Activated T-helper 1 cell treated with anti-CD3 and anti-CD28 coated beads, Interleukin-12 subunit alpha, Interleukin-12 subunit beta, Interleukin-2, Interleukin-4 antibody, amounts not matched to agents 30 ng/mL and 10 ng/mL and 1 ng/mL, durations not matched to agents 14 hours and 24 hours and 36 hours (primary cell): ENCODE measurements at regions of chr4 and their contacts with region 1.

Region 1: GRCh38 chr4:55395529-55396307 is at the start of gene TMEM165:
- DNase-seq: peak; percentile 88
- H3K4me3 Mint-ChIP-seq: peak within 1 kb of the TSS; percentile 97
- H3K27ac Mint-ChIP-seq: peak within 1 kb of the TSS; percentile 96
- H3K4me1 Mint-ChIP-seq: peaks cover 40% of the 10 kb centered on the region
- H3K27me3 Mint-ChIP-seq: peaks cover 3% of the 10 kb centered on the region
- total RNA-seq, gene TMEM165: 110 and 112 TPM in 2 replicates

Region 2: GRCh38 chr4:54941994-54942552 is 453.6 kb before region 1 on chr4:
- intact Hi-C with region 1: loop called (anchors 10 kb)
- DNase-seq: peak; percentile 16
- H3K4me3 Mint-ChIP-seq: peak overlapping the region; percentile 43
- H3K27ac Mint-ChIP-seq: peak overlapping the region; percentile 38
- H3K4me1 Mint-ChIP-seq: peaks cover 34% of the 10 kb centered on the region
- H3K27me3 Mint-ChIP-seq: no peaks in the 10 kb centered on the region

Region 3: DNA sequence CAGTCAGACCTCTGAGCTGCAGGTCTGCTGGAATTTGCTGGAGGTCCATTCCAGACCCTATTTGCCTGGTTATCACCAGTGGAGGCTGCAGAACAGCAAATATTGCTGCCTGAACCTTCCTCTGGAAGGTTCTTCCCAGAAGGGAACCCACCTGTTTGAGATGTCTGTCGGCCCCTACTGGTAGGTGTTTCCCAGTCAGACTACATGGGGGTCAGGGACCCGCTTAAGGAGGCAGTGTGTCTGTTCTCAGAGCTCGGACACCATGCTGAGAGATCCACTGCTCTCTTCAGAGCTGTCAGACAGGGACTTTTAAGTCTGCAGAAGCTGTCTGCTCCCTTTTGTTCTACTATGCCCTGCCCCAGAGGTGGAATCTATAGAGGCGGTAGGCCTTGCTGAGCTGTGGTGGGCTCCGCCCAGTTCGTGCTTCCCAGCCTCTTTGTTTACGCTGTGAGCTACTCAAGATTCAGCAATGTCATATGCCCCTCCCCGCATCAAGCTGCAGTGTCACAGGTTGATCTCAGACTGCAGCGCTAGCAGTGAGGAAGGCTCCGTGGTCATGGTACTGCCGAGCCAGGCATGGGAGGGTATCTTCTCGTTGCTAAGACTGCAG is 226.3 kb before region 1 on chr4:
- intact Hi-C with region 1: no loop called
- DNase-seq: no peak
- H3K4me3 Mint-ChIP-seq: no peak overlapping the region
- H3K27ac Mint-ChIP-seq: no peak overlapping the region
- H3K4me1 Mint-ChIP-seq: no peaks in the 10 kb centered on the region
- H3K27me3 Mint-ChIP-seq: no peaks in the 10 kb centered on the region

Region 4: DNA sequence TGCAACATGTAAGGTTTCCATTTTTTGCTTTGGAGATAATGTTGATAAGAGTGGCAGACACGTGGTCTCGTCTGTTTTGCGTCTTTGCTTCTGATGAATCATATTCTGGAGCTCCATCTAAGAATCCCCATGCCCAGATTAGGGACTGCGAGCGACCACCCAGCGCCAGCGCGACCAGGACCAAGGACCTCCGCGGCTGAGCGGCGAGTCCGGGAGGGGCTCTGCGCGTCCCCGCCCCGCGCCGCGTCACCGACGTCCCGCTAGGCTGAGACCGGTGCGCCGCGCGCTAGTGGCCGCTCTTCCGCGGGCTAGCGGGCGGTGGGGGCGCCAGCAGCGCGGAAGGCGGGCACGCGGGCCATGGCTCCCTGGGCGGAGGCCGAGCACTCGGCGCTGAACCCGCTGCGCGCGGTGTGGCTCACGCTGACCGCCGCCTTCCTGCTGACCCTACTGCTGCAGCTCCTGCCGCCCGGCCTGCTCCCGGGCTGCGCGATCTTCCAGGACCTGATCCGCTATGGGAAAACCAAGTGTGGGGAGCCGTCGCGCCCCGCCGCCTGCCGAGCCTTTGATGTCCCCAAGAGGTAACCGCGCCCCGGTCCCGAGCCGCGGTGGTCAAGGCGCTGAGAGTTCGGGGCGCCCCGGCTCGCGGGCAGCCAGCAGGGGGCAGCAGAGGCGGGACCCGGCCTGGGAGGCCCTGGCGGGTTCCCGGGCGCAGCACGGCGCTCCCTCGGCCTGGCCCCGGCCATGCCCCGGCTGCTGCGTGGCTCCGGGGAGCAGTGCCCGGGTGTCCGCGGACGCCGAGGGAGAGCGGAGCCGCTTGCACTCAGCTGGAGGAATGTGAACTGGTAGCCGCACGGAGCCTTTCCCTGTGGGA is 49.5 kb before region 1 on chr4 and contains the start of gene SRD5A3:
- intact Hi-C with region 1: loop called (anchors 1 kb)
- DNase-seq: peak; percentile 74
- H3K4me3 Mint-ChIP-seq: peak within 1 kb of the TSS; percentile 89
- H3K27ac Mint-ChIP-seq: peak within 1 kb of the TSS; percentile 92
- H3K4me1 Mint-ChIP-seq: peaks cover 36% of the 10 kb centered on the region
- H3K27me3 Mint-ChIP-seq: no peaks in the 10 kb centered on the region
- total RNA-seq, gene SRD5A3: 32.4 and 33.2 TPM in 2 replicates

Region 5: GRCh38 chr4:55407119-55407518 is 11.4 kb after region 1 on chr4:
- intact Hi-C with region 1: loop called (anchors 1 kb)
- DNase-seq: no peak
- H3K4me3 Mint-ChIP-seq: no peak overlapping the region
- H3K27ac Mint-ChIP-seq: peak overlapping the region; percentile 68
- H3K4me1 Mint-ChIP-seq: peaks cover 51% of the 10 kb centered on the region
- H3K27me3 Mint-ChIP-seq: no peaks in the 10 kb centered on the region

Region 6: GRCh38 chr4:55853484-55854046 is 457.8 kb after region 1 on chr4 and contains the start of gene EXOC1:
- intact Hi-C with region 1: loop called (anchors 2 kb)
- DNase-seq: peak; percentile 93
- H3K4me3 Mint-ChIP-seq: peak within 1 kb of the TSS; percentile 37
- H3K27ac Mint-ChIP-seq: peak within 1 kb of the TSS; percentile 53
- H3K4me1 Mint-ChIP-seq: peaks cover 27% of the 10 kb centered on the region
- H3K27me3 Mint-ChIP-seq: peaks cover 2% of the 10 kb centered on the region
- total RNA-seq, gene EXOC1: 18.3 and 18.8 TPM in 2 replicates

Region 7: DNA sequence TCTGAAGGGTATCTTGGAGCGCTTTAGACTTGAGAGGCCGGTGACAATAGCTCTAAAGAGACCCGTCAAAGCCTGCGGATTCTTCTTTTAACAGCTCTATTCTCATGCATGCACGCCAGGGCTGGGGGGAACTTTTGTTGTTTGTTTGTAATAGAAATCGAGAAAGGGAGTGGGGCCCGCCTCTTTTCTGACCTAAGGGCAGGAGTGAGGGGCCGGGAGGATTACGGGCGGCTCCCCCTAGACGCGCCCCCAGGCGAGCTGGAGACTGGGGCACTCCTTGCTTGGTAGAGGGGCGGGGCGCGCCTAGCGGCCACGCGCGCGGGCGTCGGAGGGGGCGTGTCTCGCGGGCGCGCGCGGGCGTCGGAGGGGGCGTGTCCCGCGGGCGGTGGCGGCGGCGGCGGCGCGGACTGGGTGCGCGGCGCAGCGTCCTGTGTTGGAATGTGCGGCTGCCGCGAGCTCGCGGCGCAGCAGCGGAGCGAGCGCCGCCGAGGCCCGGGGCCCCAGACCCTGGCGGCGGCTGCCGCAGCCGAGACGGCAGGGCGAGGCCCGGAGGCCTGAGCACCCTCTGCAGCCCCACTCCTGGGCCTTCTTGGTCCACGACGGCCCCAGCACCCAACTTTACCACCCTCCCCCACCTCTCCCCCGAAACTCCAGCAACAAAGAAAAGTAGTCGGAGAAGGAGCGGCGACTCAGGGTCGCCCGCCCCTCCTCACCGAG is 1511.9 kb after region 1 on chr4 and contains the start of gene REST:
- intact Hi-C with region 1: loop called (anchors 5 kb)
- DNase-seq: peak; percentile 81
- H3K4me3 Mint-ChIP-seq: peak within 1 kb of the TSS; percentile 84
- H3K27ac Mint-ChIP-seq: peak within 1 kb of the TSS; percentile 78
- H3K4me1 Mint-ChIP-seq: peaks cover 41% of the 10 kb centered on the region
- H3K27me3 Mint-ChIP-seq: peaks cover 10% of the 10 kb centered on the region
- total RNA-seq, gene REST: 52.4 and 60.0 TPM in 2 replicates